WTC11 (cell line): ENCODE measurements at regions of chr11 and their contacts with region 1.

Region 1: GRCh38 chr11:123407130-123407995 is 22.7 kb upstream of the GRAMD1B start:
- DNase-seq: peak; percentile 78
- ATAC-seq: peak; percentile 89
- H3K4me3 Mint-ChIP-seq: no peak overlapping the region
- H3K27ac Mint-ChIP-seq: peak overlapping the region; percentile 49; the same call in 1 of the 2 replicates
- H3K4me1 Mint-ChIP-seq: peaks cover 30% of the 10 kb centered on the region
- H3K27me3 Mint-ChIP-seq: peaks cover 36% of the 10 kb centered on the region
- CTCF ChIP-seq: peak; percentile 45; the same call in 1 of the 2 replicates

Region 2: GRCh38 chr11:123228496-123229163 is 178.7 kb before region 1 on chr11:
- CTCF ChIA-PET with region 1: no interaction called
- POLR2A ChIA-PET with region 1: no interaction called
- DNase-seq: no peak
- ATAC-seq: peak; percentile 66
- H3K4me3 Mint-ChIP-seq: no peak overlapping the region
- H3K27ac Mint-ChIP-seq: no peak overlapping the region
- H3K4me1 Mint-ChIP-seq: peaks cover 18% of the 10 kb centered on the region
- H3K27me3 Mint-ChIP-seq: peaks cover 3% of the 10 kb centered on the region; the same call in 1 of the 2 replicates
- CTCF ChIP-seq: no peak

Region 3: GRCh38 chr11:123308077-123308476 is 99.3 kb before region 1 on chr11:
- CTCF ChIA-PET with region 1: interaction called, 22 read pairs
- POLR2A ChIA-PET with region 1: no interaction called
- DNase-seq: no peak
- ATAC-seq: no peak
- H3K4me3 Mint-ChIP-seq: no peak overlapping the region
- H3K27ac Mint-ChIP-seq: no peak overlapping the region
- H3K4me1 Mint-ChIP-seq: peaks cover 29% of the 10 kb centered on the region
- H3K27me3 Mint-ChIP-seq: peaks cover 14% of the 10 kb centered on the region
- CTCF ChIP-seq: no peak

Region 4: DNA sequence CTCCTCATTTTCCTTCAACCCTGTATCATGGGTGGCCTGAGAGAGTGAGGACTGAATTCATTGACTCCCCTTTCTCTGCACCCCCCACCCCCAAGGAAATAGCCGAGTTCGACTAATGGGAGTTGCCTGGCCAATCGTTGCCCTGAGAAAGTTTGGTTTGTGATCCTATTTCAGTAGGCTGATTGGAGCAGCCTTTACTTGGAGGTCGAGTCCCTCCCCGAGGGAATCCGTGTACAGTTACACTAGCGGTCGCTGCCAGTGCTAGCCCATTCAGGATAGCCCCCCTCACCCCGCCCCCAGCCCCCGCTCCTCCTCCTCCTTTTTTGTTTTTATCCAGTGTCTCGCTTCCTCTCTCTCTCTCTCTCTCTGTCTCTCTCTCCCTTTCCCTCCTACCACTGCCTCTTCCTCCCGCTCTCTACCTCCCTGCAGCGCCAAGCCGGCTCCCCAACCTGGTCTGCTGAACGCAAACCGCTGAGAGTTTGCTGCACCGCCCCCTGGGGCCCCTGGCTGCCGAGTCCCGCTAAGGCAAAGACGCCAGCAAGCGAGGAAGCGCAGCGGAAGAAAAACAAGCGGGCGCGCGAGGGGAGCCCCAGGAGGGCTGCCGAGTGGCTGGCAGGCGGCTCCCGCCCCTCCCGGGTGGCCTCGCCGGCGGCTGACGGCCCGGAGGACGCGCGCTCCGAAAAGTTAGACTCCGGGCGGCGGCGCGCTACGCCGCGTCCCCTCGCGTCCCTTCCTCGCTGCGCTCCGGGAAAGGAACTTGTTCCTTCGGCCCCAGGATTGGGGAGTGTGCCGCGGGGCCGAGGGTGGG is 22.8 kb after region 1 on chr11 and contains the start of gene GRAMD1B:
- CTCF ChIA-PET with region 1: interaction called, 65 read pairs
- POLR2A ChIA-PET with region 1: no interaction called
- DNase-seq: peak; percentile 82
- ATAC-seq: peak; percentile 84
- H3K4me3 Mint-ChIP-seq: peak within 1 kb of the TSS; percentile 82
- H3K27ac Mint-ChIP-seq: peak within 1 kb of the TSS; percentile 86
- H3K4me1 Mint-ChIP-seq: peaks cover 65% of the 10 kb centered on the region
- H3K27me3 Mint-ChIP-seq: peaks cover 34% of the 10 kb centered on the region
- CTCF ChIP-seq: no peak
- total RNA-seq, gene GRAMD1B: 22.1 to 31.5 TPM (median 23.3 TPM) in 3 replicates

Region 5: GRCh38 chr11:123469089-123469488 is 61.7 kb after region 1 on chr11:
- CTCF ChIA-PET with region 1: interaction called, 217 read pairs
- POLR2A ChIA-PET with region 1: no interaction called
- DNase-seq: no peak
- ATAC-seq: no peak
- H3K4me3 Mint-ChIP-seq: no peak overlapping the region
- H3K27ac Mint-ChIP-seq: no peak overlapping the region; the same call in 1 of the 2 replicates
- H3K4me1 Mint-ChIP-seq: peaks cover 10% of the 10 kb centered on the region; the same call in 1 of the 2 replicates
- H3K27me3 Mint-ChIP-seq: no peaks in the 10 kb centered on the region
- CTCF ChIP-seq: no peak

Region 6: DNA sequence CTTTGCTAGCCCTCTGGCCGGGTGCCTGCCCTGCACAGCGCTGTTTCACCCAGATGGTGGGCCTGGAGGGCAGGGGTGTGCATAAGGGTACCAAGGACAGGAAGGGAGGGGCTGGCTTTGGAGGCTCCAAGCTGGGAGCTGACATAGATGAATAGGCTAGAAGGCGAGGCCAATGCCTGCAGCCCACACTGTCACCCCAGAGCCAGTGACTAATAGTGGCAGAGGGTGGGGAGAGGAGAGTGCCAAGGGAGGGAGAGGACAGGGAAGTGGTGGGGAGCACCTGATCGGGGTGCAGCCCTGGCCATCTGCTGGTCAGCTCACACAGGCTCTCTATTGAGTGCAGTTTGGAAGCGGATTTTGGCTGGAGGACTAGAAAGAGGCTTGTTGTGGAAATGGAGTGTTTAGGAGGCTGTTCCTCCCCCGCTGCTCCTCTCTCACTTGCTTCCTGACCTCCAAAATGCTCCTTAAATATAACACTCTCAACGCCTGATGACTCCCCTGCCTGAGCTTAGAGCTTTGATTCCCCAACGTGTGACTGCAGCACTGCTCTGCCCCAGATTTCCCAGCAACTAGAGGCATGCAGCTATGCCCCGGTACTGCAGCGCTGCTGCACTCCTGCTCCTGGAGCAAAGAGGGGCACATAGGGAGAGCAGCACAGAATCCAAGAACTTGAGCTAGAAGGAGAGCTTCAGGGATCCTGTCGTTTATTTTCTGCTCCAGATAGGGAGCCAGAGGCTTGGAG is 111.9 kb after region 1 on chr11:
- CTCF ChIA-PET with region 1: interaction called, 12 read pairs
- POLR2A ChIA-PET with region 1: interaction called, 3 read pairs
- DNase-seq: no peak
- ATAC-seq: peak; percentile 71
- H3K4me3 Mint-ChIP-seq: no peak overlapping the region
- H3K27ac Mint-ChIP-seq: peak overlapping the region; percentile 60; the same call in 1 of the 2 replicates
- H3K4me1 Mint-ChIP-seq: peaks cover 47% of the 10 kb centered on the region
- H3K27me3 Mint-ChIP-seq: no peaks in the 10 kb centered on the region
- CTCF ChIP-seq: no peak

Region 7: GRCh38 chr11:123580557-123581275 is 173.4 kb after region 1 on chr11:
- CTCF ChIA-PET with region 1: interaction called, 16 read pairs
- POLR2A ChIA-PET with region 1: no interaction called
- DNase-seq: peak; percentile 91
- ATAC-seq: peak; percentile 74
- H3K4me3 Mint-ChIP-seq: peak overlapping the region; percentile 46; the same call in 1 of the 2 replicates
- H3K27ac Mint-ChIP-seq: no peak overlapping the region
- H3K4me1 Mint-ChIP-seq: peaks cover 52% of the 10 kb centered on the region
- H3K27me3 Mint-ChIP-seq: no peaks in the 10 kb centered on the region; the same call in 1 of the 2 replicates
- CTCF ChIP-seq: peak; percentile 97

Region 8: DNA sequence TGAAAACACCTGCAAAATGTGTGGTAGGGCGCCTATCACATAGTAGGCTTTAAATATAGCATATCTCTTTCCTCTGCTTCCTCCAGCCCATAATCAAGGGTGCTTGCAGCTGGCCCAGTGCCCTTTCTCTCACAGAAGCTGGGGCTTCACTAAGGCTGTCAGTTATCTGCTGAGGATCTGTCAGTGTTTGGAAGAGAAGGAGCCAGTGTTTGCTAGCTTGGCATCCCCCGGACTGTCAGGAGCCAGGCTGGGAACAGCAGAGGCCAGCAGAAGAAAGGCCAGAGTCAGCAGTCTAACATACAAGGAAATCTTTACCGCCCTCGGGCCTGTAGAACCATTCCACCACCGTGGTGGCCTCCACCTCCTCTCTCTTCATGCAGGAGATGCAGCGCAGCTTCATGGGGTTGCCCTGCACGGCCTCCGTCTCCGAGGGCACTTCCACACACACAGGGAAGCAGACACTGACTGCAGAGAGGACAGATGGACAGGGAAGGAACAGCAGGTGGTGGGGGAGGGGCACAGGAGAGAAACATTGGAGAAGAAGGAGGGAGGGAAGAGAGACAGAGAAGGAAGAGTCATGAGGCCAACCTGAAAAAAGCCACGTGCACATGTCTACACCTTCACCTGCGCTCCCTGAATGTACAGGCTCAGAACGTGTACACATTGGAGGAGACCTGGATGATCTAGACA is 238.1 kb after region 1 on chr11:
- CTCF ChIA-PET with region 1: no interaction called
- POLR2A ChIA-PET with region 1: no interaction called
- DNase-seq: no peak
- ATAC-seq: no peak
- H3K4me3 Mint-ChIP-seq: no peak overlapping the region
- H3K27ac Mint-ChIP-seq: no peak overlapping the region
- H3K4me1 Mint-ChIP-seq: peaks cover 16% of the 10 kb centered on the region
- H3K27me3 Mint-ChIP-seq: no peaks in the 10 kb centered on the region; the same call in 1 of the 2 replicates
- CTCF ChIP-seq: no peak